Panc1 (cell line): ENCODE measurements at regions of chr3 and their contacts with region 1.

Region 1: DNA sequence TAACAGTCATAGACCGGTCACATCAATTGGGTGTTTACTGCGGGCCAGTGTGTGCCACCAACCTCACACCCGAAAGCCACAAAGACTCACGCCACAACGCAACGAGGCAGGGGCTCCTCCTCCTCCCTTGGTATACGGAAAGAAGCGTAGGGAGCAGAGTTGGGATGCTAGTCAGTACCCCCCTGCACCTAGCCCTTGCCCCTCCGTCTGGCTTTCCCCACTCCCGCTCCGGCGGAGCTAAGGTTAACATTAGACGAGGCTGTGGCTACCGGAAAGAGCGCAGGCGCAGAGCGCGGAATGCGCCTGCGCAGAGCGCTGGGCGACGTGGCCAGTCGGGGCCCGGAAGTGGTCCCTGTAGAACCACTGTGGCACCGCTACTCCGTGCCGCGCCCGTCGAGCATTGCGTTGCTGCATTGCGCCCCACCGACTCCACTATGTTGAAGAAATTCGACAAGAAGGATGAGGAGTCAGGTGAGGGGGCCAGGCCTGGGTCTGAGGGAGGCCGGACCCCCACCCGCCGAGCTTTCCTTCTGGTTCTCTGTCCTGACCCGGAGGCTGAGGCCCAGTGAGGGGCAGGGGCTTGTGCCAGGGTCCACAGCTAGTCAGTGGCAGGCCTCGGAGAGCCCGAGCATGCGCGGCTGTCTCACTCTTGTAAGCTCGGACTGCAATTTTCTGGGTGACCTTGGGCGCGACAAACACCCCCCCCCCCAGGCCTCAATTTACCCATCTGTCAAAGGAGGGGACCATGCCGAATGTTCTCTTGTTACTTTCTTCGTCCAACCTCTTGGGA is at the start of gene COPG1:
- DNase-seq: peak; percentile 74
- ATAC-seq: peak; percentile 93
- H3K4me3 ChIP-seq: peak within 1 kb of the TSS; percentile 72 to 92
- H3K27ac ChIP-seq: peak within 1 kb of the TSS; percentile 94
- H3K4me1 ChIP-seq: peaks cover 26% of the 10 kb centered on the region
- H3K27me3 ChIP-seq: no peaks in the 10 kb centered on the region
- CTCF ChIP-seq: no peak
- total RNA-seq, gene COPG1: 225 TPM

Region 2: DNA sequence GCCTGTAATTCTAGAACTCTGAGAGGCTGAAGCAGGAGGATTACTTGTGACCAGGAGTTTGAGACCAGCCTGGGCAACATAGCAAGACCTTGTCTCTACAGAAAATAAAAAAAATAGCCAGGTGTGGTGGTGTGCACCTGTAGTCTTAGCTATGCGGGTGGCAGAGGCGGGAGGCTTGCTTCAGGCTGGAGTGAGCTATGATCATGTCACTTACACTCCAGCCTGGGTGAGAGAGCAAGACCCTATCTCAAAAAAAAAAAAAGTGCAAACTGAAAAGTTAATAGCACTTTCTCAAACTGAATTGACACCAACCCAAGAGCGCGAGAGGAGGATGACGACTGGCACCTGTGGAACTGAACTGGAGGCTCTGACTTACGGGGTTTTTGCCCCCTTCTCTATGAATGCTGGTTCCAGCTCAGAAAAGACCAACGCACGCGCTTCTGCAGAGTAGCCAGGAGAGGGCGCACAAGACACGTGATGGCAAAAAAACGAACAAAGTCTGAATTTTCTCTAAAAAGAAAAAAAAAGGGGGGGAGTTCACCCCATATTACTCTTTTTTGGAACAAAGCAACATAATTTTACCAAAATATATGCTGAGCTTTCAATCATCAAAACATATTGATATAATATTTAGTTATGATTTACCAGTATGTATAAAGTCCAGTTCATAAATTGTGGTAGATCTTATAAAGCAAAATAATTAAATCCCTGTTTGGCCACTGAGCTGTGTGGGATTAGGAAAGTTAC is 279.3 kb before region 1 on chr3:
- CTCF ChIA-PET with region 1: interaction called, 11 read pairs
- POLR2A ChIA-PET with region 1: no interaction called
- in situ Hi-C with region 1: no loop called
- intact Hi-C with region 1: loop called (anchors 5 kb)
- DNase-seq: peak; percentile 39
- ATAC-seq: peak; percentile 67
- H3K4me3 ChIP-seq: no peak overlapping the region
- H3K27ac ChIP-seq: no peak overlapping the region
- H3K4me1 ChIP-seq: no peaks in the 10 kb centered on the region
- H3K27me3 ChIP-seq: no peaks in the 10 kb centered on the region
- CTCF ChIP-seq: peak; percentile 98

Region 3: GRCh38 chr3:129026728-129027543 is 222.5 kb before region 1 on chr3:
- CTCF ChIA-PET with region 1: no interaction called
- POLR2A ChIA-PET with region 1: no interaction called
- in situ Hi-C with region 1: no loop called
- intact Hi-C with region 1: loop called (anchors 10 kb)
- DNase-seq: peak; percentile 52
- ATAC-seq: peak; percentile 98
- H3K4me3 ChIP-seq: peak overlapping the region; percentile 53 to 64
- H3K27ac ChIP-seq: peak overlapping the region; percentile 80
- H3K4me1 ChIP-seq: peaks cover 14% of the 10 kb centered on the region
- H3K27me3 ChIP-seq: no peaks in the 10 kb centered on the region
- CTCF ChIP-seq: peak; percentile 96

Region 4: GRCh38 chr3:129052675-129053074 is 196.8 kb before region 1 on chr3:
- CTCF ChIA-PET with region 1: interaction called, 13 read pairs
- POLR2A ChIA-PET with region 1: no interaction called
- in situ Hi-C with region 1: no loop called
- intact Hi-C with region 1: no loop called
- DNase-seq: no peak
- ATAC-seq: no peak
- H3K4me3 ChIP-seq: no peak overlapping the region
- H3K27ac ChIP-seq: no peak overlapping the region
- H3K4me1 ChIP-seq: peaks cover 33% of the 10 kb centered on the region
- H3K27me3 ChIP-seq: no peaks in the 10 kb centered on the region
- CTCF ChIP-seq: no peak

Region 5: DNA sequence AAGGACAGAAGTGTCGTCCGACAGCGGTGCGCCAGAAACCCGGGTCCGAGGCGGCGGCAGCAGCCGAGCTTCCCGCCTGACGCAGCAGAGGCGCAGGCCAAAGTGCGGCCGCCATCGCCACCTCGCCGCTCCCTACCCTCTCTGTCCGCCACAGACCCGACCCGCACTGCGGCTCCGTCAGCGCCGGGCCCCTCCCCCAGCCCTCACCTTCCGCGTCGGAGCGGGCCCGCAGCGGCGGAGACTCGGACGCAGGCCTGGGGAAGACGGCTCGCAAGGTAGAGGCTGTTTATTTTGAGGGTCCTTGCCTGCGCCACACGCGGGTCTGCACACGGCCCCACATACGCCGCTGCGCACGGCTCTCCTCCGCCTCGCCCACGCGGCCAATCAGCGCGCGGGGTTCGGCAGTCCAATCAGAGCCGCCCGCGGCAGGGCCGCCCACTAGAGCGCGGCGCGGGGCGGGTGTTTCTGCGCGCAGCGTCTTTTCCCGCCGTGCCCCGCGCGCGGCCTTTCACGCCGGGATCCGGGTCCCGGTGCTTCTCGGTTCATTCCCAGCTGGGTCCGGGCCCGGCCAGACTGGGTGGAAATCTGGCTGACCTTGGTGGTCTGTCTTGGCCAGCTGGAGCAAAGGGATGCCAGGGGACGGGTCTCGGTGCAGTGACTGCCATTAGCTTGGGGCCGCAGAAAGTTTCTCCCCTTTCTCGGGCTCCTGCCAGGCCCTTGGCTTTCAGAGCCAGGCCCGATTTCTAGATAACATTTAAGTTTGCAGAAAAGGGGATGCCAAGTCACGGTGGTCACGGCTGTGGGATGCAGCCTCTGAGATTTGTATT is 65.7 kb before region 1 on chr3 and contains the start of gene CNBP:
- CTCF ChIA-PET with region 1: interaction called, 13 read pairs
- POLR2A ChIA-PET with region 1: interaction called, 7 read pairs
- in situ Hi-C with region 1: no loop called
- intact Hi-C with region 1: loop called (anchors 5 kb)
- DNase-seq: no peak
- ATAC-seq: peak; percentile 98
- H3K4me3 ChIP-seq: peak within 1 kb of the TSS; percentile 76
- H3K27ac ChIP-seq: peak within 1 kb of the TSS; percentile 98
- H3K4me1 ChIP-seq: peaks cover 25% of the 10 kb centered on the region
- H3K27me3 ChIP-seq: no peaks in the 10 kb centered on the region
- CTCF ChIP-seq: no peak
- total RNA-seq, gene CNBP: 355 TPM

Region 6: GRCh38 chr3:129211772-129212171 is 37.7 kb before region 1 on chr3:
- CTCF ChIA-PET with region 1: no interaction called
- POLR2A ChIA-PET with region 1: interaction called, 10 read pairs
- in situ Hi-C with region 1: no loop called
- intact Hi-C with region 1: no loop called
- DNase-seq: peak; percentile 97
- ATAC-seq: peak; percentile 96
- H3K4me3 ChIP-seq: no peak overlapping the region; a peak in 1 of 4 replicates
- H3K27ac ChIP-seq: peak overlapping the region; percentile 80
- H3K4me1 ChIP-seq: peaks cover 19% of the 10 kb centered on the region
- H3K27me3 ChIP-seq: no peaks in the 10 kb centered on the region
- CTCF ChIP-seq: no peak

Region 7: GRCh38 chr3:129224984-129225393 is 24.5 kb before region 1 on chr3:
- CTCF ChIA-PET with region 1: interaction called, 19 read pairs
- POLR2A ChIA-PET with region 1: no interaction called
- in situ Hi-C with region 1: no loop called
- intact Hi-C with region 1: no loop called
- DNase-seq: peak; percentile 67
- ATAC-seq: peak; percentile 83
- H3K4me3 ChIP-seq: peak overlapping the region; percentile 11 to 45; a peak in 3 of 4 replicates
- H3K27ac ChIP-seq: peak overlapping the region; percentile 93
- H3K4me1 ChIP-seq: peaks cover 51% of the 10 kb centered on the region
- H3K27me3 ChIP-seq: no peaks in the 10 kb centered on the region
- CTCF ChIP-seq: no peak